Naive thymus-derived CD4-positive, alpha-beta T cell (primary cell): ENCODE measurements at regions of chr3 and their contacts with region 1.

Region 1: DNA sequence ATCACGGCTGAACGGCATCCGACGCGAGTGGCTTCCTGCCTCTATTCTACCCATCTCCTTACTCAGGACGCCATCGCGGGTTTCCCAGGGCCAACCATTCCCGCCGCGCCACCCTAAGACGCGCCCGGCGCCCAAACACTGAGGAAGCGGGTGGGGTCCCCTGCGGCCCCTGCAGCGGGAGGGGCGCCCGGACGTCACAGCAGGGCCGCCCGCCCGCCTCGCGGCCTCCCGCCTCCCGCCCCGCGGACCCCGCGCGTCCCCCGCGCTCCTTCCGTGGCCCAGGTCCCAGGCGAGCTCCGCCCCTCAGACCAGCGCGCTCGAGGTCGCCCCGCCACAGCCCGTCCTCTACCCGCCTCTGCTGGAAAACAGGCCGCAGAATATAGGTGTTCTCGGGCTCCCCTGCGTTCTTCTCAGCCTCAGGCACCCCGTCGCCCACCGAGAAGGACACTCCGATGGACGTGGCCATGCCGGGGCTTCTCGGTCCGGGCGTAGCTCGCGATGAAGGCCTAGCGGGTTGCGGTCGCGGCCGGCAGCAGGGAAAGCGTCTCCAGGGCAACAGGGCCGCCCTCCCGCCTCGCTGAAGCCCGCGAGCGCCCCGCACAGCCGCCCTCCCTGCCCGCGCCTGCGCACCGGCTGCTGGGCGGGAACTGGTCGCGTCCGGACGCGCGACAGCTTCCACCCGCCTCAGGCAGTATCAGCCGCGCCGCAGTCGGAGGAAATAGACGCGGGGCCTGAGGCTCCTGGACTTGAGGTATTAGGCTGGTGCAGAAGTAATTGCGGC is at the start of gene DYNLT2B:
- DNase-seq: peak; percentile 82 to 91 (median 88)
- ATAC-seq: peak; percentile 94
- H3K4me3 ChIP-seq: peak within 1 kb of the TSS; percentile 89
- H3K4me3 Mint-ChIP-seq: peak within 1 kb of the TSS; percentile 82 to 95 (median 94)
- H3K27ac ChIP-seq: peak within 1 kb of the TSS; percentile 90
- H3K27ac Mint-ChIP-seq: peak within 1 kb of the TSS; percentile 88 to 98 (median 94)
- H3K4me1 ChIP-seq: no peaks in the 10 kb centered on the region
- H3K4me1 Mint-ChIP-seq: peaks cover 0 to 23% (median 9%) of the 10 kb centered on the region in 7 donors
- H3K27me3 ChIP-seq: no peaks in the 10 kb centered on the region
- H3K27me3 Mint-ChIP-seq: no peaks in the 10 kb centered on the region
- total RNA-seq, gene DYNLT2B: 3.3 to 20.8 (median 5.1) TPM

Region 2: GRCh38 chr3:196219194-196219978 is 98.5 kb before region 1 on chr3:
- CTCF ChIA-PET with region 1: no interaction called
- POLR2A ChIA-PET with region 1: no interaction called
- intact Hi-C with region 1: loop called in 1 of 2 experiments (anchors 5 kb)
- DNase-seq: peak in 8 of 9 donors; percentile 56 to 90 (median 80)
- ATAC-seq: peak; percentile 96
- H3K4me3 ChIP-seq: peak overlapping the region; percentile 49
- H3K4me3 Mint-ChIP-seq: peak overlapping the region; percentile 76 to 89 (median 82)
- H3K27ac ChIP-seq: peak overlapping the region; percentile 60
- H3K27ac Mint-ChIP-seq: peak overlapping the region; percentile 87 to 98 (median 91)
- H3K4me1 ChIP-seq: peaks cover 6 to 7% of the 10 kb centered on the region in 2 donors
- H3K4me1 Mint-ChIP-seq: peaks cover 10 to 20% (median 15%) of the 10 kb centered on the region in 7 donors
- H3K27me3 ChIP-seq: no peaks in the 10 kb centered on the region
- H3K27me3 Mint-ChIP-seq: peaks cover 0 to 5% (median 4%) of the 10 kb centered on the region in 5 donors

Region 3: GRCh38 chr3:196246612-196247308 is 71.1 kb before region 1 on chr3:
- CTCF ChIA-PET with region 1: no interaction called
- POLR2A ChIA-PET with region 1: no interaction called
- intact Hi-C with region 1: no loop called
- DNase-seq: no peak
- ATAC-seq: peak; percentile 58
- H3K4me3 ChIP-seq: no peak overlapping the region
- H3K4me3 Mint-ChIP-seq: no peak overlapping the region
- H3K27ac ChIP-seq: no peak overlapping the region
- H3K27ac Mint-ChIP-seq: no peak overlapping the region
- H3K4me1 ChIP-seq: no peaks in the 10 kb centered on the region
- H3K4me1 Mint-ChIP-seq: peaks cover 0 to 7% (median 0%) of the 10 kb centered on the region in 7 donors
- H3K27me3 ChIP-seq: no peaks in the 10 kb centered on the region
- H3K27me3 Mint-ChIP-seq: no peaks in the 10 kb centered on the region

Region 4: DNA sequence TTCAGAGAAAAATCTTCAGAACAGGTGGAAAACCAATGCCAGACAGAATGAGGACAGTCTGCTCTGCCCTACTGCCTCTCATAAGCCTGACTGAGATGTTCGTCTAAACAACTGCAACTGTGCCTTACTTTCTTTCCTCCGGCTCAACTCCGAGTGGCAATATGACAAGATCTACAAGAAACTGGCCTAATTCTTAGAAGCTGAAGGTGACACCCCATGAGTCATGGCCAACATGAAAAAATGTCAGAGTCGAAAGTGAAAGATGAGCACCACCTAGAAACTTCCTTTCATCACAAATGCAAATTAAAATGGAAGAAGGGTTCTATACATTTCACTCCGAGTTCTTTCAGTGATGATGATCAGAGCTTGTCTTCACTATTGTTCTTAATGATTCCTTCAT is 43.3 kb before region 1 on chr3:
- CTCF ChIA-PET with region 1: interaction called, 3 read pairs
- POLR2A ChIA-PET with region 1: interaction called, 3 read pairs
- intact Hi-C with region 1: loop called (anchors 1 kb)
- DNase-seq: peak in 8 of 9 donors; percentile 20 to 72 (median 42)
- ATAC-seq: peak; percentile 91
- H3K4me3 ChIP-seq: peak overlapping the region; percentile 7
- H3K4me3 Mint-ChIP-seq: peak overlapping the region; percentile 41 to 84 (median 74)
- H3K27ac ChIP-seq: peak overlapping the region; percentile 50
- H3K27ac Mint-ChIP-seq: peak overlapping the region; percentile 57 to 96 (median 89)
- H3K4me1 ChIP-seq: peaks cover 10 to 21% of the 10 kb centered on the region in 2 donors
- H3K4me1 Mint-ChIP-seq: peaks cover 19 to 62% (median 37%) of the 10 kb centered on the region in 7 donors
- H3K27me3 ChIP-seq: no peaks in the 10 kb centered on the region
- H3K27me3 Mint-ChIP-seq: no peaks in the 10 kb centered on the region

Region 5: GRCh38 chr3:196287440-196288148 is 30.3 kb before region 1 on chr3 and contains the start of gene PCYT1A:
- CTCF ChIA-PET with region 1: interaction called, 3 read pairs
- POLR2A ChIA-PET with region 1: interaction called, 22 read pairs
- intact Hi-C with region 1: loop called (anchors 1 kb)
- DNase-seq: peak; percentile 48 to 75 (median 65)
- ATAC-seq: peak; percentile 93
- H3K4me3 ChIP-seq: peak within 1 kb of the TSS; percentile 99
- H3K4me3 Mint-ChIP-seq: peak within 1 kb of the TSS; percentile 98 to 100 (median 99)
- H3K27ac ChIP-seq: peak within 1 kb of the TSS; percentile 84
- H3K27ac Mint-ChIP-seq: peak within 1 kb of the TSS; percentile 92 to 98 (median 97)
- H3K4me1 ChIP-seq: peaks cover 12 to 15% of the 10 kb centered on the region in 2 donors
- H3K4me1 Mint-ChIP-seq: peaks cover 20 to 56% (median 46%) of the 10 kb centered on the region in 7 donors
- H3K27me3 ChIP-seq: no peaks in the 10 kb centered on the region
- H3K27me3 Mint-ChIP-seq: peaks cover 0 to 2% (median 0%) of the 10 kb centered on the region in 5 donors
- total RNA-seq, gene PCYT1A: 47.5 to 87.6 (median 62.9) TPM

Region 6: GRCh38 chr3:196360586-196360985 is 42.7 kb after region 1 on chr3:
- CTCF ChIA-PET with region 1: no interaction called
- POLR2A ChIA-PET with region 1: interaction called, 10 read pairs
- intact Hi-C with region 1: no loop called
- DNase-seq: no peak
- ATAC-seq: no peak
- H3K4me3 ChIP-seq: no peak overlapping the region
- H3K4me3 Mint-ChIP-seq: no peak overlapping the region
- H3K27ac ChIP-seq: no peak overlapping the region
- H3K27ac Mint-ChIP-seq: peak overlapping the region in 1 of 9 donors; percentile 43
- H3K4me1 ChIP-seq: no peaks in the 10 kb centered on the region
- H3K4me1 Mint-ChIP-seq: peaks cover 0 to 12% (median 5%) of the 10 kb centered on the region in 7 donors
- H3K27me3 ChIP-seq: no peaks in the 10 kb centered on the region
- H3K27me3 Mint-ChIP-seq: no peaks in the 10 kb centered on the region

Region 7: GRCh38 chr3:196432137-196432879 is 114.4 kb after region 1 on chr3 and contains the start of gene UBXN7:
- CTCF ChIA-PET with region 1: interaction called, 3 read pairs
- POLR2A ChIA-PET with region 1: interaction called, 7 read pairs
- intact Hi-C with region 1: loop called (anchors 1 kb)
- DNase-seq: peak; percentile 92 to 97 (median 95)
- ATAC-seq: peak; percentile 94
- H3K4me3 ChIP-seq: peak within 1 kb of the TSS; percentile 100
- H3K4me3 Mint-ChIP-seq: peak within 1 kb of the TSS; percentile 81 to 98 (median 86)
- H3K27ac ChIP-seq: peak within 1 kb of the TSS; percentile 90
- H3K27ac Mint-ChIP-seq: peak within 1 kb of the TSS; percentile 68 to 95 (median 81)
- H3K4me1 ChIP-seq: peaks cover 4 to 6% of the 10 kb centered on the region in 2 donors
- H3K4me1 Mint-ChIP-seq: peaks cover 17 to 39% (median 32%) of the 10 kb centered on the region in 7 donors
- H3K27me3 ChIP-seq: no peaks in the 10 kb centered on the region
- H3K27me3 Mint-ChIP-seq: peaks cover 0 to 2% (median 0%) of the 10 kb centered on the region in 5 donors
- total RNA-seq, gene UBXN7: 52.6 to 90.6 (median 77.0) TPM

Region 8: GRCh38 chr3:196942226-196942914 is 624.5 kb after region 1 on chr3 and contains the start of gene NCBP2:
- CTCF ChIA-PET with region 1: no interaction called
- POLR2A ChIA-PET with region 1: no interaction called
- intact Hi-C with region 1: loop called in 1 of 2 experiments (anchors 2 kb)
- DNase-seq: peak; percentile 98 to 100 (median 99)
- ATAC-seq: peak; percentile 97
- H3K4me3 ChIP-seq: peak within 1 kb of the TSS; percentile 100
- H3K4me3 Mint-ChIP-seq: peak within 1 kb of the TSS; percentile 94 to 99 (median 98)
- H3K27ac ChIP-seq: peak within 1 kb of the TSS; percentile 94
- H3K27ac Mint-ChIP-seq: peak within 1 kb of the TSS; percentile 96 to 100 (median 98)
- H3K4me1 ChIP-seq: peaks cover 16 to 20% of the 10 kb centered on the region in 2 donors
- H3K4me1 Mint-ChIP-seq: peaks cover 30 to 64% (median 49%) of the 10 kb centered on the region in 7 donors
- H3K27me3 ChIP-seq: no peaks in the 10 kb centered on the region
- H3K27me3 Mint-ChIP-seq: peaks cover 0 to 5% (median 0%) of the 10 kb centered on the region in 5 donors
- total RNA-seq, gene NCBP2: 42.9 to 77.3 (median 67.5) TPM